Transverse colon (tissue), 4 donors: ENCODE measurements at regions of chr20 and their contacts with region 1.

Region 1: DNA sequence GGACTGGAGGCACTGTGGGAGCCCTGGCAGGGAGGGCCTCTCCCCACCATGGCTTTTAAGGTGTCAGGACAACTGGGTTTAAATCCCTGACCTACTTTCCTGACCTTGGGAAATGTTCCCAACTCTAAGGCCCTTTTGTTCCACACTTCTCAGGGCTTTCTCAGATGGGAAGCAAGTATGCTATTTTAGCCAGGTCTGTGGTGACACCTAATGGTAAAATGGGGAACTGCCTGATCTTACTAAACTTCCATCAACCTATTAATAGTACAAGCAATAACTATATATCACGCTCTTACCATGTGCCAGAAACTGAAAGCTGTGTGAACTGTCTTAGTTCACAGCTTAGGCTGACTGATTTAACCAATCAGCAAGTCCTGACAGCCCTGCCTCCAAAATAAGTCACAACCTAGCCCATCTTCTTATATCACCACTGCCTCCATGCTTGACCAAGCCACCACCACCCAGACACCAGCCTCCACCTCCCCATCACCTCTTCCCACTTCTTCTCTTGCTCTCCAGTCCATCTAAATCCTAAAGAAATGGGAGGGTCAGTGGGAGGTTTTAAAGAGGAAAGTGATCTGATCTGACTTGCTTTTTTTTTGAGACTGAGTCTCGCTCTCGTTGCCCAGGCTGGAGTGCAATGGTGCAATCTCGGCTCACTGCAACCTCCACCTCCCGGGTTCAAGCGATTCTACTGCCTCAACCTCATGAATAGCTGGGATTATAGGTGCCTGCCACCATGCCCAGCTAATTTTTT is 6.9 kb upstream of the BLCAP start:
- DNase-seq: peak; percentile 44
- H3K4me3 ChIP-seq: no peak overlapping the region
- H3K27ac ChIP-seq: no peak overlapping the region
- H3K4me1 ChIP-seq: peaks cover 3 to 35% (median 10%) of the 10 kb centered on the region in 4 donors
- H3K27me3 ChIP-seq: no peaks in the 10 kb centered on the region
- CTCF ChIP-seq: peak; percentile 82 to 97 (median 87)
- EP300 ChIP-seq: no peak
- POLR2A ChIP-seq: no peak

Region 2: DNA sequence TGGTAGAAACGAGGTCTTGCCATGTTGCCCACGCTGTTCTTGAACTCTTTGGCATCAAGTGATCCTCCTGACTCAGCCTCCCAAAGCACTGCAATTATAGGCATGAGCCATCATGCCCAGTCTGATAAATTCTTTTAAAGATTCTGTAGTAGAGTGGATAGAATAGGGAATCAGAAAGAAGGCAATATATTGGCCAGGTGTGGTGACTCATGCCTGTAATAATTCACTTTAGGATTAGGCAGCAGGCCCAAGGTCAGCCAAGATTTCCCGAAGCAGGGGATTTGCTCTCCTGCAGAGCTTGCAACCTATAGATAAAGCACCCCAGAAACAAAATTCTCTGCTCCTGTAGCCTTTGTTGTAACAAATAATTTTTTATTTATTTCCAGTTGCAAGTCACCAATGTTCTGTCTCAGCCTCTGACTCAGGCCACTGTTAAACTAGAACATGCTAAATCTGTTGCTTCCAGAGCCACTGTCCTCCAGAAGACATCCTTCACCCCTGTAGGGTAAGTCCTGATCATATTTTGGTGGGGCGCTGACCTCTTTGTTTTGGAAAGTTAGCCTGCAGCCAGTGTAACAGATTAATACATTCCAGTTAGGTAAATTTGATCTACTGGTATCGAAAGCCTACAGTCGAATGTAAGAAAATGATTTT is 324.8 kb before region 1 on chr20:
- in situ Hi-C with region 1: loop called in 1 of 4 experiments (anchors 5 kb)
- intact Hi-C with region 1: loop called (anchors 10 kb)
- DNase-seq: no peak
- H3K4me3 ChIP-seq: no peak overlapping the region
- H3K27ac ChIP-seq: no peak overlapping the region
- H3K4me1 ChIP-seq: no peaks in the 10 kb centered on the region
- H3K27me3 ChIP-seq: no peaks in the 10 kb centered on the region
- CTCF ChIP-seq: no peak
- EP300 ChIP-seq: no peak
- POLR2A ChIP-seq: no peak

Region 3: GRCh38 chr20:37270576-37271420 is 263.8 kb before region 1 on chr20:
- in situ Hi-C with region 1: loop called (anchors 5 to 10 kb)
- intact Hi-C with region 1: loop called (anchors 2 kb)
- DNase-seq: no peak
- H3K4me3 ChIP-seq: no peak overlapping the region
- H3K27ac ChIP-seq: peak overlapping the region in 3 of 4 donors; percentile 15 to 24 (median 21)
- H3K4me1 ChIP-seq: peaks cover 0 to 5% (median 2%) of the 10 kb centered on the region in 4 donors
- H3K27me3 ChIP-seq: no peaks in the 10 kb centered on the region
- CTCF ChIP-seq: no peak
- EP300 ChIP-seq: no peak
- POLR2A ChIP-seq: no peak

Region 4: DNA sequence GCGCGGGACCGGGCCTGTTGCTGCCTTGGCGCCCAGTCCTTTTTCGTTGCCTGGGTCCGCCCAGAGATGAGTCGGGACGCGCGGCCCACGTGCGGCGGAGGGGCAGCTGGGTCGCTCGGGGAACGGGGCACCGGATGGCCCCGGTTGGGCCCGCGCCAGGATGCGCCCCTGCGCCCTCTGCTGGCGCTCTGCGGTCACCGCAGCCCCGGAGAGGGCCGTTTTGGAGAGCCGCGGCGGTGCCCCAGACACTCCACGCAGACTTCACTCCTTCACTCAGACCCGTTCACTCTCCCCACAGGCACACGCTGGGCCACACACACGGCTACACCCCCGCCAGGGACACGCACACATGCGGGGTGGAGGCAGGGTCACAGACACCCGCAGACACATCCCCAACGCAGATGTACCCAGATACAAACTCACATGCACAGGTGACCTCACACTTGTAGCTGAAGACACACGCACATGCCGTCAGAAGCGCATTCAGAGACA is 149.8 kb before region 1 on chr20:
- in situ Hi-C with region 1: loop called in 2 of 4 experiments (anchors 10 to 25 kb)
- intact Hi-C with region 1: no loop called
- DNase-seq: peak; percentile 71
- H3K4me3 ChIP-seq: peak overlapping the region in 3 of 4 donors; percentile 24 to 37 (median 32)
- H3K27ac ChIP-seq: peak overlapping the region in 1 of 4 donors; percentile 59
- H3K4me1 ChIP-seq: peaks cover 0 to 26% (median 18%) of the 10 kb centered on the region in 4 donors
- H3K27me3 ChIP-seq: no peaks in the 10 kb centered on the region
- CTCF ChIP-seq: peak; percentile 89 to 95 (median 93)
- EP300 ChIP-seq: no peak
- POLR2A ChIP-seq: no peak

Region 5: GRCh38 chr20:37406010-37406998 is 128.3 kb before region 1 on chr20:
- in situ Hi-C with region 1: loop called in 1 of 4 experiments (anchors 10 kb)
- intact Hi-C with region 1: no loop called
- DNase-seq: peak; percentile 47
- H3K4me3 ChIP-seq: peak overlapping the region; percentile 10 to 42 (median 21)
- H3K27ac ChIP-seq: no peak overlapping the region
- H3K4me1 ChIP-seq: peaks cover 7 to 32% (median 12%) of the 10 kb centered on the region in 4 donors
- H3K27me3 ChIP-seq: peaks cover 31% of the 10 kb centered on the region
- CTCF ChIP-seq: no peak
- EP300 ChIP-seq: no peak
- POLR2A ChIP-seq: no peak